IMR-90 (cell line): ENCODE measurements at regions of chr2 and their contacts with region 1.

Region 1: DNA sequence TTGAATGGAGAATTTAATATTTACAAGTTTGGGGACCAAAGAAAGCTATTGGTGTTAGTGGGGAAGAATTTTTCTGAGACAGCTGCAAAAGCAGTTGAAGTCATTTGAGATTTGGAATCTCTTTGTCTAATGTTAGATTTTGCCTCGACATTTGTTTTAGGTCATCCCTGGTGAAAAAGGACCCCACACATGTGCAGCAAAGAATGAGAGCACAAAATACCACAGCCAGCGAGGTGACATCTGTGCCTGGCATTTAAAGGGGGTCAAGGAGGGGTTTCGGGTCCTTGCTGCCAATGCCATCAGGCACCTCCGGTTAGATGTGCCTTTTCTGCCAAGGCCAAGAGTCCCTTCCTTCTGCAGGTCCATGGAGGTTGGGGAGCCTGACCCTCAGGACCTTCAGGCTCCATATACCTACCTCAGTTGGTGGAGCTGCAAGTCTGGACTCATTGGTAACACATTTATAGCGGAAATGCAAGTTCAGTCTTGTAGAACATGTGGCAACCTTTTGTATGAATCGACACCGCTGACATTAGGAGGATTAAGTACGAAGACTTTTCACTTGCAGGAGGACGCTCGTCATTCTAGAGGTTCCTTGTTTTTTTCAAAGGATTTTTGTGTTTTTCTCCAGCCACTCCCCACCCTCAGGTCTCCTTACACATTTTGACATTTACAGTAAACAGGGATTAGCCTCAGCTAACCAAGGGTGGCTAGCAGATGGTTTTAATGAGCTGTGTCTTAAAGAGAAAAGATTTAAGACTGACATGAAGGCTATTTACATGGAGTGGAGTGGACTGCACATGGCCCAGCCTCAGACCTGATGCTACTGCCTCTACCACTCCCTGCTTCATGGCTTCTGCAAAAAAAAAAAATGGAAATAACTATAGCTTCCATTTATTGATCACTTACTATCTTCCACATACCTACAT is 173.6 kb downstream of the TRIB2 start:
- DNase-seq: no peak
- ATAC-seq: no peak
- H3K4me3 ChIP-seq: no peak overlapping the region
- H3K27ac ChIP-seq: no peak overlapping the region
- H3K4me1 ChIP-seq: no peaks in the 10 kb centered on the region; the same call in 1 of the 2 replicates
- H3K27me3 ChIP-seq: no peaks in the 10 kb centered on the region
- CTCF ChIP-seq: no peak
- POLR2A ChIP-seq: no peak
- RAD21 ChIP-seq: no peak

Region 2: GRCh38 chr2:12903272-12903671 is 12.9 kb after region 1 on chr2:
- CTCF ChIA-PET with region 1: interaction called, 11 read pairs
- POLR2A ChIA-PET with region 1: no interaction called
- dilution Hi-C with region 1: no loop called
- in situ Hi-C with region 1: no loop called
- intact Hi-C with region 1: no loop called
- DNase-seq: peak; percentile 44
- ATAC-seq: peak; percentile 61
- H3K4me3 ChIP-seq: no peak overlapping the region
- H3K27ac ChIP-seq: no peak overlapping the region
- H3K4me1 ChIP-seq: peaks cover 2% of the 10 kb centered on the region; the same call in 1 of the 2 replicates
- H3K27me3 ChIP-seq: no peaks in the 10 kb centered on the region
- CTCF ChIP-seq: no peak
- POLR2A ChIP-seq: no peak
- RAD21 ChIP-seq: no peak